ENCODE measurements at regions of chr4 and their contacts with region 1.

Region 1: DNA sequence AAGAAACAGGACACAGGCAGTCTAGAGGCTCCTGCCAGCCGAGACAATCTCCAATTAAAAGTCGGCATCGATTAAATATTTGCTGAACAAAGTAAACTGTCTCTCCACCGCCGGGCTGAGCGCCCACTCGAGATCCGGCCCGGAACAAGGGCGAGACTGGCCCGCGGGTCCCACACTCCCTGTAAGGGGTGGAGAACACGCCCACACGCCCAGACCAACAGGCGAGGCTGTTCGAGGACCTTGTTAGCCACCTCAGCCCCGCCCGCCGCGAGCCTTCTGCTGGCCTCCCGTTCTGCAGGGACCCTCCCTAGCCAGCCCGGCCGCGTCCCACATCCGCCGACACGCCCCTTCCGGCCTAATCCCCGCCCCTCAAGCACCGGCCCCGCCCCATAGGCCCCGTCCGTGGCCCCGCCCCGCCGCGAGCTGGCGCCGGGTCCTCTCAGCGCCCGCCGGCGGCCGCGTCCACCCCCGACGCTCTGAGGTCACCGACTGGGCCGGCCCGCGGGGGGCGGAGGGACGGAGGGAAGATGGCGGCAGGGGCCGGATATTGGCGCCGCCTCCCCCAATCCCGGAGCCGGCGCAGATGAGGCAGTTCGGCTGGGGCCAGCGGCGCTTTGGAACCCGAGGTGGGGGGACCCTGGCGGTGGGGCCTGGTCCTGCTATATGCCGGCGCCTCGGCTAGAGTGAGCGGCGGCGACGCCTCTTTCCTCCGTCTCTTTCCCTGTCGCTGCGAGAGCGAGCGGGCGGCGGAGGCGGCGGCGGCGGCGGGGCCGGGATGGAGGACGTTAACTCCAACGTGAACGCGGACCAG is at the start of gene SLAIN2:
- DNase-seq: peak; percentile 99
- ATAC-seq: peak; percentile 85
- H3K4me3 Mint-ChIP-seq: peak within 1 kb of the TSS; percentile 98
- H3K27ac Mint-ChIP-seq: peak within 1 kb of the TSS; percentile 98
- H3K4me1 Mint-ChIP-seq: peaks cover 62% of the 10 kb centered on the region
- H3K27me3 Mint-ChIP-seq: no peaks in the 10 kb centered on the region
- total RNA-seq, gene SLAIN2: 55.7 to 140 TPM

Region 2: GRCh38 chr4:47553329-47554125 is 787.6 kb before region 1 on chr4:
- CTCF ChIA-PET with region 1: no interaction called
- POLR2A ChIA-PET with region 1: no interaction called
- intact Hi-C with region 1: no loop called
- DNase-seq: no peak
- ATAC-seq: no peak
- H3K4me3 Mint-ChIP-seq: no peak overlapping the region
- H3K27ac Mint-ChIP-seq: no peak overlapping the region
- H3K4me1 Mint-ChIP-seq: no peaks in the 10 kb centered on the region
- H3K27me3 Mint-ChIP-seq: no peaks in the 10 kb centered on the region

Region 3: DNA sequence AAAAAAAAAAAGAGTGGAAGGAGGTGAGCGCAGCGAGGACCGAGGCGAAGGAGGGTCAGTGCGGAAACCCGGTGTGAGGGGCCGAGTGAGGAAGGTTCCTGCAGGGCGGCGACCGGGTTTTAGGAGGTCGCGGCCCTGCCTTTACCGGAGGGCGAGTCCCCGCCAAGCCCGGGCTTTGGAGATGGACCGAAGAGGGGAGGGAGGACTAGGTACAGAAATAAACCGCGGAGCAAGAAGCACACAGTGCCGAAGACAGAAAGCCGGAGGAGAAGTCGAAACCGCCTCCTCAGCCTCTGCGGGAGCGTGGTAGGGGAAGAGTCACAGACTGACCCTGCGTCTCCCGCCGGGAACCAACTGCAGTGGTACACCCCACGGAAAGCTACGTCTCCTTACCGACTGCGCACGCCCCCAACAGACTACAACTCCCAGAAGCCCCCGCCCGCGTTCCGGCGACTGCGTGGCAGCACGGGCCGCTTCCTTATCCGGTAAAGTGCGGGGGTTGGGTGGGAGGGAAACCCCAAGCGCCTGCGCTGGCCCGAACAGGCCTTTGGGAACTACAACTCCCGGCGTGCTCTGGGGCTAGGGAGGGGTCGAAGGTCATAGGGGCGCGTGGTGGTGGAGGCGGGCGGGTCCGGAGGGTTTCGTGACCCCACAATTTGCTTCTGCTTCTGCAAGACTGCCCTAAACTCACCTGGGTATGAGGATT is 426.8 kb before region 1 on chr4 and contains the start of gene NFXL1:
- CTCF ChIA-PET with region 1: no interaction called
- POLR2A ChIA-PET with region 1: no interaction called
- intact Hi-C with region 1: loop called (anchors 1 kb)
- DNase-seq: peak; percentile 98
- ATAC-seq: peak; percentile 97
- H3K4me3 Mint-ChIP-seq: peak within 1 kb of the TSS; percentile 94
- H3K27ac Mint-ChIP-seq: peak within 1 kb of the TSS; percentile 90
- H3K4me1 Mint-ChIP-seq: peaks cover 25% of the 10 kb centered on the region
- H3K27me3 Mint-ChIP-seq: no peaks in the 10 kb centered on the region
- total RNA-seq, gene NFXL1: 12.6 to 14.4 TPM

Region 4: DNA sequence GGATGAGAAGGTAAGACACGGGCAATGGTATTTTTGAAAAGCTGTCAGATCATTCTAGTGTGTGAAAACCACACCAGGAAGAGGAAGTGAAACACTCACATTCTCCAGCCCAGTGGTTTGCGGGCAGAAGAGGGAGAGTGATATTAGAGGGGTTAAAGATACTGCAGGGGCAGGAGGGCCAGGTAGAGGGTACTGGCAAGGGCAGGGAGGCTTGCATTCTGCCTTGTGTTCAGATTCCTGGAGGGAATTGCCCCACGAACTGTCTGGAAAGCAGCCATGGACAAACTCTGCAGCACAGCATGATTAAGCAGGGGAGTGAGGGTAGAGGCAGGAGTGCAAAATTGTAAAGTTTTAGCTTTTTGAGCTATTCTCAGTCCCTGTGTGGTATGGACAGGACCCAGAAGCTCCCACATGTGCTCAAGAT is 293.7 kb before region 1 on chr4:
- CTCF ChIA-PET with region 1: no interaction called
- POLR2A ChIA-PET with region 1: no interaction called
- intact Hi-C with region 1: loop called in 1 of 2 experiments (anchors 5 kb)
- DNase-seq: peak; percentile 90
- ATAC-seq: peak; percentile 83
- H3K4me3 Mint-ChIP-seq: peak overlapping the region; percentile 47
- H3K27ac Mint-ChIP-seq: peak overlapping the region; percentile 70
- H3K4me1 Mint-ChIP-seq: peaks cover 60% of the 10 kb centered on the region
- H3K27me3 Mint-ChIP-seq: peaks cover 17% of the 10 kb centered on the region

Region 5: DNA sequence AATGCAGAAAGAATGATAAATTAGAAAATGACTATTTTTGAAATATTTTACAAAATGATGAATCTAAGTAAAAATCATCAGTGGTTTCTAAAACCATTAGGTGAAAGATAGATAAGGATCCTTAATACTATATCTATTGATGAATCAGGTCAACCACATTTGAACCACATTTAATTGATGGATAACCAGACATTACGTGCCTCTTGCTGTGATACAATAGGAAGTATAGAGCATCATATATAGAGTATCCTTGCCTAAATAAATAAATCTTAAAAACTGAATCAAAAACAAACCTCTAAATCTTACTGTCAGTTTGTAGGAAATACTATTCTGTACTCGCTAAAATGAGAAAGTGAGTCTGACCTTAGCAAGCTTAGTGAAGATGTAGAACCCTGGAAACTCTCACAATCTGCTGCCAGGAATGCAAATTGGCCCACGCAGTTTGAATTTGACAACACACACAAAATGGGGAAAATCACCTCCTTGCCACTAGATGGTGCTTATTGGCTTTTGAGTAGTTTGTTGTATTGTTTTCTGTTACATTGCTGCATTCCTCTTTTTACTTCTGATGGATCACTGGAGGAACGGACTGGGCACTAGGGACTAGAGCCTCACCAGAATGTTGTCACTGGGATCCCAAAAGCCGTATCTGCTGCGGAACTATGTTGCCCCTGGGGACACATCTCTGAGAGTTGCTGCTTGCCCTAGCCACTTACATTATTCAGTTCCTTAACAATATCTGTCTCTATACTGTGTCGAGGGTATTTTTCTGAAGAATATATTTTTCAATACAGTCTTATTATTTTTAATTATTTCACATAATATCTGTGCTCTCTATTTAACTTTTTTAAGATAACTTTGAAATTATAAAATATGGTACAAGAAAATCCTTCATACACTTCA is 25.2 kb before region 1 on chr4:
- CTCF ChIA-PET with region 1: interaction called, 7 read pairs
- POLR2A ChIA-PET with region 1: no interaction called
- intact Hi-C with region 1: loop called (anchors 2 kb)
- DNase-seq: peak; percentile 43
- ATAC-seq: peak; percentile 74
- H3K4me3 Mint-ChIP-seq: no peak overlapping the region
- H3K27ac Mint-ChIP-seq: no peak overlapping the region
- H3K4me1 Mint-ChIP-seq: peaks cover 4% of the 10 kb centered on the region
- H3K27me3 Mint-ChIP-seq: no peaks in the 10 kb centered on the region

Region 6: GRCh38 chr4:48388525-48389154 is 47.5 kb after region 1 on chr4:
- CTCF ChIA-PET with region 1: no interaction called
- POLR2A ChIA-PET with region 1: no interaction called
- intact Hi-C with region 1: loop called in 1 of 2 experiments (anchors 1 kb)
- DNase-seq: no peak
- ATAC-seq: no peak
- H3K4me3 Mint-ChIP-seq: no peak overlapping the region
- H3K27ac Mint-ChIP-seq: no peak overlapping the region
- H3K4me1 Mint-ChIP-seq: no peaks in the 10 kb centered on the region
- H3K27me3 Mint-ChIP-seq: no peaks in the 10 kb centered on the region

Region 7: DNA sequence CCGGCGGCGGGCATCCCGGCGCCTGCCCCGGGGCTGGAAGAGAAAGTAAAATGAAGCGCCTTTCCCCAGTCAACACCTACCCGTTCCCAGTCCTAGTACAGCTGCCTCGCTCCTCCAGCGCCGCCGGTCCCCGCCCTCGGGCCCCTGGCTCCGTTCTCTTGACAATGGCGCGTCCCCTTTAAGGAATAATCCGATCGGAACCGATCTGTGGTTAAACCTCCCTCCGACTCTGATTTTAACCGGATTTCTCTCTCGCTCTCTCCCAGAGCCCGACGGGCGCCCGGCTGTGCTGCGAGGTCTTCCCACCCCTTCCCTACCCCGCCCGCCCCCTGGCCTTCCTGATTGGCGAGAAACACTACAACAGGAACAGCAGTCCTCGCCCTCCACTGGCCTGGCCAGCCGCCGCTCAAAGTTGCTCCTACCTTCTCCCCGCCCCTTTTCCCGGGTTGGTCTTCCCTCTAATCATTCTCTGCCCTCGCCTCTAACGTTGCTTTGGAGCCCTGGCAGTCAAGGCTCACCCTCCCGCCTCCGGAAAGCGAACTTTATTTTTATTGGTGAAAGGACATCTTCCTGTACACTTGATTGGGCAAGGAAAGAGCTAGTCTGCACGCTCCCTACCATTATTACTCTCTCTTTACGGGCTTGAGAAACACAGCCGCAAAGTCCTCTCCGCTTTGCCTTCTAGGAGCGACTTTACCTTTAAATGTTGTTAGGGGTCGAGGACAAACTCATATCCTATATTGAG is 439.0 kb after region 1 on chr4 and contains the start of gene FRYL:
- CTCF ChIA-PET with region 1: no interaction called
- POLR2A ChIA-PET with region 1: no interaction called
- intact Hi-C with region 1: loop called (anchors 1 to 10 kb)
- DNase-seq: peak; percentile 99
- ATAC-seq: peak; percentile 93
- H3K4me3 Mint-ChIP-seq: peak within 1 kb of the TSS; percentile 98
- H3K27ac Mint-ChIP-seq: peak within 1 kb of the TSS; percentile 98
- H3K4me1 Mint-ChIP-seq: peaks cover 42% of the 10 kb centered on the region
- H3K27me3 Mint-ChIP-seq: no peaks in the 10 kb centered on the region
- total RNA-seq, gene FRYL: 67.9 to 69.8 TPM

Region 8: GRCh38 chr4:48906206-48907173 is 565.3 kb after region 1 on chr4 and contains the start of gene OCIAD2:
- CTCF ChIA-PET with region 1: no interaction called
- POLR2A ChIA-PET with region 1: no interaction called
- intact Hi-C with region 1: loop called (anchors 5 to 10 kb)
- DNase-seq: peak; percentile 90
- ATAC-seq: peak; percentile 65
- H3K4me3 Mint-ChIP-seq: peak within 1 kb of the TSS; percentile 85
- H3K27ac Mint-ChIP-seq: peak within 1 kb of the TSS; percentile 93
- H3K4me1 Mint-ChIP-seq: peaks cover 48% of the 10 kb centered on the region
- H3K27me3 Mint-ChIP-seq: no peaks in the 10 kb centered on the region
- total RNA-seq, gene OCIAD2: 83.6 to 97.4 TPM